ENCODE measurements at regions of chr6 and their contacts with region 1.

Region 1: GRCh38 chr6:117555882-117556498 is 46.3 kb downstream of the GOPC start:
- DNase-seq: peak; percentile 45
- H3K4me3 ChIP-seq: no peak overlapping the region
- H3K27ac ChIP-seq: no peak overlapping the region
- H3K4me1 ChIP-seq: no peaks in the 10 kb centered on the region
- H3K27me3 ChIP-seq: no peaks in the 10 kb centered on the region
- CTCF ChIP-seq: peak; percentile 85

Region 2: GRCh38 chr6:117346142-117346930 is 209.7 kb before region 1 on chr6:
- CTCF ChIA-PET with region 1: no interaction called
- POLR2A ChIA-PET with region 1: no interaction called
- intact Hi-C with region 1: loop called (anchors 2 kb)
- DNase-seq: peak; percentile 39
- H3K4me3 ChIP-seq: no peak overlapping the region
- H3K27ac ChIP-seq: no peak overlapping the region
- H3K4me1 ChIP-seq: no peaks in the 10 kb centered on the region
- H3K27me3 ChIP-seq: peaks cover 22% of the 10 kb centered on the region
- CTCF ChIP-seq: peak; percentile 59; the same call in 1 of the 2 replicates

Region 3: DNA sequence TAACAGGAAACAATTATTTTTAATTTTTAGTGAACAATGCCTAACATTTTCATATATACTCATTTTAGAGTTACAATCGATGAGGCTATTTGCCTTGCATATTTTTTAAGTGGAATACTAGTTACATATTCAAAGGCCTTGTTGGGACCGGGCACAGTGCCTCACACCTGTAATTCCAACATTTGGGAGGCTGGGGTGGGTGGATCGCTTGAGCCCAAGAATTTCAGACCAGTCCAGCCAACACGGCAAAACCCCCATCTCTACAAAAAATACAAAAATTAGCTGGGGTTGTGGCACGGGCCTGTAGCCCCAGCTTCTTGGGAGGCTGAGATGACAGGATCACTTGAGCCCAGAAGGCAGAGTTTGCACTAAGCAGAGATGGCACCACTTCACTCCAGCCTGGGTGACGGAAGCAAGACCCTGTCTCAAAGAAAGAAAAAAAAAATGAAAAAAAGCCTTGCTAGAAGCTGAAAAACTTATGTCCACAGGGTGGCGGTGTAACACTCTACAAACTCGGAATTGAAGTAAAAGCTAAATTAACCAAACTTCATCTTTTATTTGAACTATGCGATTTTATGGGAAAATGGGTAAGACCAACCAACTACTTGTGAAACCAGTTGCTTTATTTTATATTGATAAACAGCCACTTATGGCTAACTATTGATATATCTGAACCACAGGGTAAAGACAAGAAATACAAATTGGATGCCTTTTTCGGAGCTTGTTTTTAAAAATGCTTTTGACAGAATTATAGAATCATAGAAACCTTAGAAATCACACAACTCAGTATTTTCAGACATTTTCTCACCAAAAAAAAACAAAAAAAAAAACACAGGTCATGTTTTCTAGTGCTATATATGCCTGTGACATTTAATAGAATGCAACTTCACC is 106.2 kb before region 1 on chr6:
- CTCF ChIA-PET with region 1: interaction called, 3 read pairs
- POLR2A ChIA-PET with region 1: interaction called, 8 read pairs
- intact Hi-C with region 1: loop called (anchors 1 kb)
- DNase-seq: peak; percentile 78
- H3K4me3 ChIP-seq: no peak overlapping the region
- H3K27ac ChIP-seq: no peak overlapping the region
- H3K4me1 ChIP-seq: no peaks in the 10 kb centered on the region
- H3K27me3 ChIP-seq: peaks cover 42% of the 10 kb centered on the region
- CTCF ChIP-seq: peak; percentile 79

Measured in A673 (cell line).